Activated naive CD4-positive, alpha-beta T cell treated with anti-CD3 and anti-CD28 coated beads for 36 hours (primary cell): ENCODE measurements at regions of chr1 and their contacts with region 1.

Region 1: GRCh38 chr1:56831871-56832693 is 12.9 kb upstream of the FYB2 start:
- DNase-seq: peak; percentile 78
- H3K4me3 Mint-ChIP-seq: no peak overlapping the region
- H3K27ac Mint-ChIP-seq: no peak overlapping the region
- H3K4me1 Mint-ChIP-seq: peaks cover 6% of the 10 kb centered on the region
- H3K27me3 Mint-ChIP-seq: peaks cover 22% of the 10 kb centered on the region

Region 2: GRCh38 chr1:56491441-56491840 is 340.6 kb before region 1 on chr1:
- CTCF ChIA-PET with region 1: no interaction called
- intact Hi-C with region 1: no loop called
- DNase-seq: no peak
- H3K4me3 Mint-ChIP-seq: no peak overlapping the region
- H3K27ac Mint-ChIP-seq: no peak overlapping the region
- H3K4me1 Mint-ChIP-seq: no peaks in the 10 kb centered on the region
- H3K27me3 Mint-ChIP-seq: peaks cover 2% of the 10 kb centered on the region

Region 3: DNA sequence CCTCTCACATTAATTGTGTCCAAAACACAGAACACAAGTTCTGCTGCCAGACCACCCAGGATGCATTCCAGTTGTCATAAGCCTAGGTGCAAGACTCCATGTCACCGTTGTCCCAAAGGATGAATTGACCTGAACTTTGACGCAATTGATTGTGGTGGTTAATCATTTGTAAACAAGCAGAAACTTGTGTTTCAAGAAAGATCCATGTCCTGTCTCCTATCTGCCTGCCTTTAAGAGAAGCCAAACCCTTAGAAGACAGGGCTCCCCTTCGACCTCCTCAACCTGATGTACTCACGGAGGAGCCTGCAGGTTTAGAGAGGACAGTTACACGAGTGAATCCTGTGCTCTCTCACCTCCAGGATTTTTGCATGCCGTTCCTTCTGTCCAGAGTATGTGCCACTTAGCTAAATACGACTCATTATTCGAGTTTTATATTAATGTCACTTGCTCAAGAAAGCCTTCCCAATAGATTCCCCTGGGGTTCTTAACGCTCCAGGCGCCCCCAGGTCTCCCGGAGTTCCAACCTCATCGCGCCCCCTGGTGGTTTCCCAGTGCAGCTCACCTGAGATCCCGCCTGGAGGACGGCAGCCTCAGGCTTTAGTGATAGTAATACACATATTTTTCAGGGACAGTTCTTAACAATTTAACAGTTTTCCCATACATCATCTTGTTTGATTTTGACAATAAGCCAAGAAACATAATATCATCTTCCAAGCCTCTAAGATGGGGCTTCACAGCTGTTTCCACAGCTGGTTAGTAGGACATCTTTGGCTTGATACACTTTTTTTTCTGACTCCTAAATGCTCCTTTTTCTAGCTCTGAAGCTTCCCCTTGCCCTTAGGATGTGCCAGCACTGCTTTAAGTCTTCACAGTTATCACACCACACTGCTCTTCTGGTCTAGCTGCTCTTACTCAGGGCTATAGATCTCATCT is 136.1 kb after region 1 on chr1:
- CTCF ChIA-PET with region 1: no interaction called
- intact Hi-C with region 1: loop called (anchors 1 kb)
- DNase-seq: peak; percentile 9
- H3K4me3 Mint-ChIP-seq: no peak overlapping the region
- H3K27ac Mint-ChIP-seq: no peak overlapping the region
- H3K4me1 Mint-ChIP-seq: no peaks in the 10 kb centered on the region
- H3K27me3 Mint-ChIP-seq: peaks cover 8% of the 10 kb centered on the region

Region 4: GRCh38 chr1:57061369-57061768 is 229.3 kb after region 1 on chr1:
- CTCF ChIA-PET with region 1: no interaction called
- intact Hi-C with region 1: loop called (anchors 10 kb)
- DNase-seq: no peak
- H3K4me3 Mint-ChIP-seq: no peak overlapping the region
- H3K27ac Mint-ChIP-seq: no peak overlapping the region
- H3K4me1 Mint-ChIP-seq: no peaks in the 10 kb centered on the region
- H3K27me3 Mint-ChIP-seq: peaks cover 3% of the 10 kb centered on the region

Region 5: GRCh38 chr1:58047265-58047858 is 1215.3 kb after region 1 on chr1:
- CTCF ChIA-PET with region 1: interaction called, 3 read pairs
- intact Hi-C with region 1: loop called (anchors 2 kb)
- DNase-seq: peak; percentile 44
- H3K4me3 Mint-ChIP-seq: no peak overlapping the region
- H3K27ac Mint-ChIP-seq: no peak overlapping the region
- H3K4me1 Mint-ChIP-seq: no peaks in the 10 kb centered on the region
- H3K27me3 Mint-ChIP-seq: no peaks in the 10 kb centered on the region

Region 6: GRCh38 chr1:58162952-58163550 is 1331.0 kb after region 1 on chr1:
- CTCF ChIA-PET with region 1: no interaction called
- intact Hi-C with region 1: loop called (anchors 2 kb)
- DNase-seq: peak; percentile 38
- H3K4me3 Mint-ChIP-seq: no peak overlapping the region
- H3K27ac Mint-ChIP-seq: no peak overlapping the region
- H3K4me1 Mint-ChIP-seq: no peaks in the 10 kb centered on the region
- H3K27me3 Mint-ChIP-seq: no peaks in the 10 kb centered on the region